ENCODE measurements at regions of chr4 and their contacts with region 1.

Region 1: DNA sequence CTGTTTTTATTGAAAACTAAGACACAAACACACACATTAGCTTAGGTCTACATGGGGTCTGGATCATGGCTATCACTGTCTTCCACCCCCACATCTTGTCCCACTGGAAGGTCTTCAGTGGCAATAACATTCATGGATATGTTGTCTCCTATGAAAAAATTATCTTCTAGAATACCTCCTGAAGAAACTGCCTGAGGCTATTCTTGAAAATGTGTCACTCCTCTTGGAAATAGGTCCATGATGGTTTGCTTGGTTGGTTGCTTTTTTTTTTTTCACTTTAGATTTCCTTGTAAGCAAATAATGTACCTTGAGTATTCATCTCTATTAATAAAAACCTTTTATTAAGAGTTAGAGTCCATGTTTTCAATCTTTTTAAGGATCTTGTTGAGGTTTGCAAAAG is 195.3 kb upstream of the PDE5A start:
- DNase-seq: no peak
- ATAC-seq: no peak
- H3K4me3 ChIP-seq: no peak overlapping the region
- H3K27ac ChIP-seq: no peak overlapping the region
- H3K4me1 ChIP-seq: no peaks in the 10 kb centered on the region
- H3K27me3 ChIP-seq: no peaks in the 10 kb centered on the region
- CTCF ChIP-seq: no peak
- POLR2A ChIP-seq: no peak
- RAD21 ChIP-seq: no peak

Region 2: DNA sequence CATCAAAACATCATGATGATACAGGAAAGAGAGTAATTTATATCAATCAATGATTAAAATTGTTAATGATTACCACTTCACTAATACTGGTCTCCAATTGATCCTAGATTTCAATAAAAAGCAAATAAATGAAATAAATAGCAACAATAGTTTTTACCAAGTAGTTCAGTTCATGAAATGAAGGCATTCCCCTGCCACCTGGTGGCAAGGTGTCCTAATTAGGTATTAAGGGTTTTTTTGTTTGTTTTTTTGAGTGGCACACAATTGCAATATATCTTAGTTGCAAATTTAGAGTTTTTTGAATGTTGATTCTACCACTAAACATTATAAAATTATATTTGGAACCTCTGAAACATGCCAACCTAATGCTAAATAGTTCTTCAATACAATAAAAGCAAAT is 37.9 kb before region 1 on chr4:
- CTCF ChIA-PET with region 1: no interaction called
- POLR2A ChIA-PET with region 1: no interaction called
- dilution Hi-C with region 1: no loop called
- in situ Hi-C with region 1: no loop called
- intact Hi-C with region 1: loop called (anchors 5 kb)
- DNase-seq: peak; percentile 23
- ATAC-seq: no peak
- H3K4me3 ChIP-seq: no peak overlapping the region
- H3K27ac ChIP-seq: no peak overlapping the region
- H3K4me1 ChIP-seq: no peaks in the 10 kb centered on the region; the same call in 1 of the 2 replicates
- H3K27me3 ChIP-seq: no peaks in the 10 kb centered on the region
- CTCF ChIP-seq: peak; percentile 42
- POLR2A ChIP-seq: no peak
- RAD21 ChIP-seq: peak; percentile 58

Region 3: GRCh38 chr4:120018786-120019185 is 194.9 kb after region 1 on chr4:
- CTCF ChIA-PET with region 1: no interaction called
- POLR2A ChIA-PET with region 1: no interaction called
- dilution Hi-C with region 1: no loop called
- in situ Hi-C with region 1: no loop called
- intact Hi-C with region 1: loop called (anchors 5 kb)
- DNase-seq: peak; percentile 57
- ATAC-seq: peak; percentile 40
- H3K4me3 ChIP-seq: no peak overlapping the region
- H3K27ac ChIP-seq: no peak overlapping the region
- H3K4me1 ChIP-seq: peaks cover 2% of the 10 kb centered on the region; the same call in 1 of the 2 replicates
- H3K27me3 ChIP-seq: no peaks in the 10 kb centered on the region
- CTCF ChIP-seq: no peak
- POLR2A ChIP-seq: no peak
- RAD21 ChIP-seq: no peak

Measured in IMR-90 (cell line).